Colonic mucosa (tissue), 4 donors: ENCODE measurements at regions of chr19 and their contacts with region 1.

Region 1: GRCh38 chr19:18450931-18451845 is 13.3 kb upstream of the ISYNA1 start:
- DNase-seq: peak; percentile 90
- H3K4me3 ChIP-seq: no peak overlapping the region
- H3K27ac ChIP-seq: no peak overlapping the region
- H3K4me1 ChIP-seq: no peaks in the 10 kb centered on the region
- H3K27me3 ChIP-seq: no peaks in the 10 kb centered on the region
- CTCF ChIP-seq: peak; percentile 99

Region 2: DNA sequence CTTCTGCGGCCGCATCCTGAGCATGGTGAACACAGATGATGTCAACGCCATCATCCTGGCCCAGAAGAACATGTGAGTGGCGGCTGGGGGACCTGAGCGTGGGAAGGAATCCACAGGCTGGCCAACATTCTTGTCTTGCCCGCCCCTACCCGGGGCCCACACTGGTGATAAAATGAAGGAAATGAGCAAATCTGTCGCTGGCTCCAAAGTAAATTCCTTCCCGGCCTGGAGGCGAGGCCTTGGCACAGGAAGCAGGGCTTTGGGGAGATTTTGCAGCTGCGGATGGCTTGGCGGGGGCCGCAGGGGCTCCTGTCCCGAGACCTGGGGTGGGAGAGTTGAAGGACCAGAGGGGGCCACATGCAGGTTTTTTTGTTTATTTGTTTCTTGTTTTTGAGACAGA is 110.9 kb after region 1 on chr19:
- intact Hi-C with region 1: loop called (anchors 10 kb)
- DNase-seq: no peak
- H3K4me3 ChIP-seq: no peak overlapping the region
- H3K27ac ChIP-seq: no peak overlapping the region
- H3K4me1 ChIP-seq: peaks cover 3% of the 10 kb centered on the region
- H3K27me3 ChIP-seq: no peaks in the 10 kb centered on the region
- CTCF ChIP-seq: no peak